T-cell (primary cell): ENCODE measurements at regions of chr14 and their contacts with region 1.

Region 1: GRCh38 chr14:23120541-23121251 is 1.6 kb upstream of the CEBPE start:
- DNase-seq: peak; percentile 33 to 88 (median 61)
- ATAC-seq: peak; percentile 58 to 71 (median 64)
- H3K4me3 ChIP-seq: peak overlapping the region; percentile 10 to 36
- H3K4me3 Mint-ChIP-seq: peak overlapping the region; percentile 52 to 81 (median 56)
- H3K27ac ChIP-seq: peak overlapping the region; percentile 77
- H3K27ac Mint-ChIP-seq: peak overlapping the region; percentile 96 to 99
- H3K4me1 ChIP-seq: peaks cover 32 to 53% of the 10 kb centered on the region in 2 experiments
- H3K4me1 Mint-ChIP-seq: peaks cover 55 to 58% (median 57%) of the 10 kb centered on the region in 3 donors
- H3K27me3 ChIP-seq: peaks cover 0 to 4% of the 10 kb centered on the region in 2 experiments
- H3K27me3 Mint-ChIP-seq: peaks cover 0 to 3% of the 10 kb centered on the region in 2 donors

Region 2: GRCh38 chr14:22791301-22791700 is 329.4 kb before region 1 on chr14:
- CTCF ChIA-PET with region 1: no interaction called
- POLR2A ChIA-PET with region 1: no interaction called
- DNase-seq: no peak
- ATAC-seq: no peak
- H3K4me3 ChIP-seq: no peak overlapping the region
- H3K4me3 Mint-ChIP-seq: no peak overlapping the region
- H3K27ac ChIP-seq: no peak overlapping the region
- H3K27ac Mint-ChIP-seq: no peak overlapping the region
- H3K4me1 ChIP-seq: no peaks in the 10 kb centered on the region
- H3K4me1 Mint-ChIP-seq: no peaks in the 10 kb centered on the region
- H3K27me3 ChIP-seq: peaks cover 0 to 5% of the 10 kb centered on the region in 2 experiments
- H3K27me3 Mint-ChIP-seq: peaks cover 6 to 7% of the 10 kb centered on the region in 2 donors

Region 3: DNA sequence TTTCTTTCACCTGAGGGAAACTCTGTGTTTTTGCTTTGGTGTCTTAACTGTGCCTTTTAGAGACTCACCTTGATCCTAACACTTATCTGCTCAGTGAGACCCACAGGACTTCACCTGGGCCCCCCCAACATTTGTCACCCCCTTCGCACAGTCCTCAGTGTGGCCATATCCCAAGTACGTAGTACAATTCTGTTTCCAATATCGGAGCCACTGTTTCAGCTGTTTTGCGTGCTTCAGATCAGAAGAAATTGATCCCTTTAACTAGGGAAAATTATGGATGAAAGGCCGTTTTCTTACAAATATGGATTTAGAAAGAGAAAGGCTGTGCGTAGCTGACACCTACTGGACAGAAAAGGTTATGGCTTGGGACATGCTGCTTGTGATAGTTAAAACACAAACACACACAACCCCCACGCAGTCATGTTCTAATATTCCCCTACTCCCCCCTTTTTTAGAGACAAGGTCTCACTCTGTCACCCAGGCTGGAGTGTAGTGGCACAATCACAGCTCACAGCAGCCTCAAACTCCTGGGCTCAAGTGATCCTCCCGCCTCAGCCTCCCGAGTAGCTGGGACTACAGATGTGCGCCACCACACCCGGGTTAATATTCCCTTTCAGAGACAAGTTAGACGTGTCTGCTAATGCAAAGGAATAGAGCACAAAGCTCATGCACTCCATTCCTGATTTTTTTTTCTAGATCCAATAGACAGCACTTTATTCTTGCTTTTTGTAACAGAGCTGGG is 66.4 kb after region 1 on chr14:
- CTCF ChIA-PET with region 1: interaction called, 7 to 74 read pairs
- POLR2A ChIA-PET with region 1: interaction called, 6 to 8 read pairs
- DNase-seq: peak in 14 of 35 experiments; percentile 6 to 65 (median 15)
- ATAC-seq: peak in 3 of 4 experiments; percentile 43 to 62 (median 44)
- H3K4me3 ChIP-seq: no peak overlapping the region
- H3K4me3 Mint-ChIP-seq: no peak overlapping the region
- H3K27ac ChIP-seq: no peak overlapping the region
- H3K27ac Mint-ChIP-seq: peak overlapping the region in 1 of 2 donors; percentile 35
- H3K4me1 ChIP-seq: peaks cover 11 to 12% of the 10 kb centered on the region in 2 experiments
- H3K4me1 Mint-ChIP-seq: peaks cover 0 to 5% (median 2%) of the 10 kb centered on the region in 3 donors
- H3K27me3 ChIP-seq: peaks cover 0 to 8% of the 10 kb centered on the region in 2 experiments
- H3K27me3 Mint-ChIP-seq: no peaks in the 10 kb centered on the region